ENCODE measurements at regions of chr4 and their contacts with region 1.

Region 1: DNA sequence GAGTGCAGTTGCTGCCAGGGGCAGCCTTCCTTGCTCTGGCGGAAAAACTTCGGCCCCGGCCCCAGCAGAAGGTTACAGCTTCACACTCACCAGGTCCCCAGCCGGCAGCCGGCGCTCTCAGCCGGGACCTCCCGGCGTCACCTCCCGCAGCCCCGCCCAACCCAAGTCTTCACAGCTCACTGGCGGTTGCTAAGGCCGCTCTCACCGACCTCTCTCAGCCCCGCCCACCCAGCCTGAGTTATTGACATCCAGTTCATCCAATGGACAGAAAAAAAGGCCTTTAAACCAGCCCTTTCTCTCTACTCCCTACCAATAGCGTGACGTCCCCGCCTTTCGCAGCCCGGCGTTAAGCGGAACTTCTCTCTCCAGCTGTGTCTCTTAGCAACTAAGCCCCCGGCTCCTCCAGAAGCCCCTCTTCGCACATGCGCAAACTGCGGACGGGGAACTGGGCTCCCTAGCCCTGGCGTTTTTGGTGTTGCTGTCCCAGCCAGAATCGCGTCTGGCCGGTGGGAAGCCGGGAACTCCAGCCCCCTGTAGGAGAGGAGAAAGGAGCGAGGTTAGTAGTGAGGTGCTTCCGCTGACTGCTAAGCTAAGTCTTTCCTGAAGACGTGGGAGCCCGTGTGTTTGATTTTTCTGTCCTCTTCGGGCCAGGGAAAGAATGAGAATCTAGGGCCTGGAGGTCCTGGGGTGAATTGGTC is at the start of gene BBS12:
- DNase-seq: peak; percentile 99
- H3K4me3 Mint-ChIP-seq: peak within 1 kb of the TSS; percentile 95
- H3K27ac Mint-ChIP-seq: peak within 1 kb of the TSS; percentile 92
- H3K4me1 Mint-ChIP-seq: peaks cover 14% of the 10 kb centered on the region
- H3K27me3 Mint-ChIP-seq: no peaks in the 10 kb centered on the region
- total RNA-seq, gene BBS12: 3.7 and 5.5 TPM in 2 replicates

Region 2: GRCh38 chr4:122602277-122603142 is 130.0 kb before region 1 on chr4:
- intact Hi-C with region 1: loop called (anchors 1 kb)
- DNase-seq: no peak
- H3K4me3 Mint-ChIP-seq: peak overlapping the region; percentile 35
- H3K27ac Mint-ChIP-seq: peak overlapping the region; percentile 31
- H3K4me1 Mint-ChIP-seq: peaks cover 18% of the 10 kb centered on the region
- H3K27me3 Mint-ChIP-seq: peaks cover 16% of the 10 kb centered on the region

Region 3: GRCh38 chr4:122747883-122748282 is 15.4 kb after region 1 on chr4:
- intact Hi-C with region 1: loop called (anchors 1 kb)
- DNase-seq: no peak
- H3K4me3 Mint-ChIP-seq: no peak overlapping the region
- H3K27ac Mint-ChIP-seq: no peak overlapping the region
- H3K4me1 Mint-ChIP-seq: peaks cover 22% of the 10 kb centered on the region
- H3K27me3 Mint-ChIP-seq: peaks cover 14% of the 10 kb centered on the region

Measured in activated T-helper 2 cell treated with anti-CD3 and anti-CD28 coated beads, Interferon-gamma antibody, Interleukin-2, Interleukin-4, amounts not matched to agents 10 μg/mL and 5 μg/mL and 100 μg/mL, durations not matched to agents 14 hours and 24 hours and 36 hours (primary cell).